Activated CD4-positive, alpha-beta memory T cell treated with anti-CD3 and anti-CD28 coated beads for 36 hours (primary cell): ENCODE measurements at regions of chr6 and their contacts with region 1.

Region 1: DNA sequence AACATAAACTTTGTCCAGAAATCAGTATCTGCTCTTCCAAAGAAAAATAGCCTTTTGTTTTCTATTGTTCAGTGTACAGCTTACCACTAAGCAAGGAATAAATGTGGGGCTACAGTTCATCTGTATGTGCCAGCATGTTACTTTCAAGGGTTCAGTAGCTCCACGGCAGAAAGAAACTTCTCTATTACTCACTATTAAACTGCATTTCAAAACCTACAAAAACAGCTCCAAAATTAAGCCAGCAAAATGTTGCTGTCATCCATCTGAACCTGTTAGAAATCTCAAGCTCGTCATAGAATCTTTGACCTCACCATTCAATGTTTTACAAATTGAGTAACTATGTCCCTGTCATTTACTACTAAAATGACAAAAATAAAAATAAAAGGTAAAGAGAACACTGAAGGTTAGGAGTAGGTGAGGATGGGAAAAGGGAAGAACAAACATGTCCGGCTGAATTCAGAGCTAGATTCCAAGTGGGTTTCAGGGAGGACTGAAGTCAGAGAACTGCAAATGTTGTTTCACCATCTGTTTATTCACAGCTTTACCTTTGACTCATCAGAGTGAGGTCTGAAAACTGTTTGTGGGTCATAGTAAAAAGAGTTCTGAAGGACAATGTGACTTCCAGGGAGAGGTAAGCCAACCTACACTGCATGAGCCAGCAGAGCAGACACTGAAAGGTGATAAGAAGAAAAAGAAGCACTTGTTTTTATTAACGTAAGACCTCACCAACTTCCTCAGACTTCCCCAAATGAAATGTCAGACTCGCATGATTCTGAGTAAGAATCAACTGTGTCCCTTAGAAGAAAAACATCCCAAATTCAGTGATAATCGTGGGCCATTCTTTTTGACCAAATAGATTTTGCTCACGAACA is 62.0 kb downstream of the ATXN1 start:
- DNase-seq: peak; percentile 53
- H3K4me3 Mint-ChIP-seq: peak overlapping the region; percentile 78
- H3K27ac Mint-ChIP-seq: peak overlapping the region; percentile 89
- H3K4me1 Mint-ChIP-seq: peaks cover 75% of the 10 kb centered on the region
- H3K27me3 Mint-ChIP-seq: no peaks in the 10 kb centered on the region

Region 2: GRCh38 chr6:16533721-16534136 is 165.5 kb before region 1 on chr6:
- CTCF ChIA-PET with region 1: no interaction called
- POLR2A ChIA-PET with region 1: interaction called, 3 read pairs
- intact Hi-C with region 1: loop called (anchors 5 kb)
- DNase-seq: no peak
- H3K4me3 Mint-ChIP-seq: no peak overlapping the region
- H3K27ac Mint-ChIP-seq: peak overlapping the region; percentile 77
- H3K4me1 Mint-ChIP-seq: peaks cover 43% of the 10 kb centered on the region
- H3K27me3 Mint-ChIP-seq: no peaks in the 10 kb centered on the region

Region 3: GRCh38 chr6:16670183-16670582 is 29.1 kb before region 1 on chr6:
- CTCF ChIA-PET with region 1: no interaction called
- POLR2A ChIA-PET with region 1: interaction called, 7 read pairs
- intact Hi-C with region 1: loop called (anchors 1 kb)
- DNase-seq: no peak
- H3K4me3 Mint-ChIP-seq: peak overlapping the region; percentile 33
- H3K27ac Mint-ChIP-seq: peak overlapping the region; percentile 87
- H3K4me1 Mint-ChIP-seq: peaks cover 81% of the 10 kb centered on the region
- H3K27me3 Mint-ChIP-seq: no peaks in the 10 kb centered on the region

Region 4: GRCh38 chr6:16684896-16685554 is 14.2 kb before region 1 on chr6:
- CTCF ChIA-PET with region 1: interaction called, 38 read pairs
- POLR2A ChIA-PET with region 1: interaction called, 43 read pairs
- intact Hi-C with region 1: loop called (anchors 1 kb)
- DNase-seq: peak; percentile 94
- H3K4me3 Mint-ChIP-seq: peak overlapping the region; percentile 52
- H3K27ac Mint-ChIP-seq: peak overlapping the region; percentile 79
- H3K4me1 Mint-ChIP-seq: peaks cover 91% of the 10 kb centered on the region
- H3K27me3 Mint-ChIP-seq: no peaks in the 10 kb centered on the region

Region 5: GRCh38 chr6:16731478-16732051 is 32.3 kb after region 1 on chr6:
- CTCF ChIA-PET with region 1: interaction called, 9 read pairs
- POLR2A ChIA-PET with region 1: interaction called, 4 read pairs
- intact Hi-C with region 1: loop called (anchors 1 kb)
- DNase-seq: peak; percentile 62
- H3K4me3 Mint-ChIP-seq: peak overlapping the region; percentile 29
- H3K27ac Mint-ChIP-seq: peak overlapping the region; percentile 64
- H3K4me1 Mint-ChIP-seq: peaks cover 81% of the 10 kb centered on the region
- H3K27me3 Mint-ChIP-seq: no peaks in the 10 kb centered on the region

Region 6: DNA sequence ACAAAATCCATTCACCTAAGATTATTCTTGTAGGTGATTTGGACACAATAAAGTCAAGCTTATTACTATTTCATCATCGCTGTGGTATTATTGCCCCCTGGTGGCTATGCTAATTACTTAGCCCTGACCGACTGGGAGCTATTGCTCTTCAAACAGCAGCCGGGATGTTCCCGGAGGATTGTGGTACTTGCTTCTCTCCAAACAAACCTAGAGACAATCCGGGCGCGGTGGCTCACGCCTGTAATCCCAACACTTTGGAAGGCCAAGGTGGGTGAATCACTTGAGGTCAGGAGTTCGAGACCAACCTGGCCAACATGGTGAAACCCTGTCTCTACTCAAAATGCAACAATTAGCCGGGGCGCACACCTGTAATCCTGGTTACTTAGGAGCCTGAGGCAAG is 387.2 kb after region 1 on chr6:
- CTCF ChIA-PET with region 1: no interaction called
- POLR2A ChIA-PET with region 1: no interaction called
- intact Hi-C with region 1: no loop called
- DNase-seq: peak; percentile 19
- H3K4me3 Mint-ChIP-seq: no peak overlapping the region
- H3K27ac Mint-ChIP-seq: no peak overlapping the region
- H3K4me1 Mint-ChIP-seq: no peaks in the 10 kb centered on the region
- H3K27me3 Mint-ChIP-seq: peaks cover 7% of the 10 kb centered on the region

Region 7: GRCh38 chr6:17297271-17298080 is 598.2 kb after region 1 on chr6:
- CTCF ChIA-PET with region 1: no interaction called
- POLR2A ChIA-PET with region 1: no interaction called
- intact Hi-C with region 1: no loop called
- DNase-seq: no peak
- H3K4me3 Mint-ChIP-seq: no peak overlapping the region
- H3K27ac Mint-ChIP-seq: no peak overlapping the region
- H3K4me1 Mint-ChIP-seq: no peaks in the 10 kb centered on the region
- H3K27me3 Mint-ChIP-seq: peaks cover 6% of the 10 kb centered on the region